Heart left ventricle (tissue), 16 donors: ENCODE measurements at regions of chr1 and their contacts with region 1.

Region 1: GRCh38 chr1:204989266-204990058 is 53.5 kb upstream of the CNTN2 start:
- DNase-seq: peak; percentile 63 to 81 (median 68)
- ATAC-seq: peak; percentile 68 to 91 (median 86)
- H3K4me3 ChIP-seq: no peak overlapping the region
- H3K27ac ChIP-seq: no peak overlapping the region
- H3K4me1 ChIP-seq: peaks cover 0 to 10% (median 0%) of the 10 kb centered on the region in 12 donors
- H3K27me3 ChIP-seq: no peaks in the 10 kb centered on the region
- CTCF ChIP-seq: peak; percentile 83 to 92 (median 92)
- POLR2A ChIP-seq: no peak

Region 2: DNA sequence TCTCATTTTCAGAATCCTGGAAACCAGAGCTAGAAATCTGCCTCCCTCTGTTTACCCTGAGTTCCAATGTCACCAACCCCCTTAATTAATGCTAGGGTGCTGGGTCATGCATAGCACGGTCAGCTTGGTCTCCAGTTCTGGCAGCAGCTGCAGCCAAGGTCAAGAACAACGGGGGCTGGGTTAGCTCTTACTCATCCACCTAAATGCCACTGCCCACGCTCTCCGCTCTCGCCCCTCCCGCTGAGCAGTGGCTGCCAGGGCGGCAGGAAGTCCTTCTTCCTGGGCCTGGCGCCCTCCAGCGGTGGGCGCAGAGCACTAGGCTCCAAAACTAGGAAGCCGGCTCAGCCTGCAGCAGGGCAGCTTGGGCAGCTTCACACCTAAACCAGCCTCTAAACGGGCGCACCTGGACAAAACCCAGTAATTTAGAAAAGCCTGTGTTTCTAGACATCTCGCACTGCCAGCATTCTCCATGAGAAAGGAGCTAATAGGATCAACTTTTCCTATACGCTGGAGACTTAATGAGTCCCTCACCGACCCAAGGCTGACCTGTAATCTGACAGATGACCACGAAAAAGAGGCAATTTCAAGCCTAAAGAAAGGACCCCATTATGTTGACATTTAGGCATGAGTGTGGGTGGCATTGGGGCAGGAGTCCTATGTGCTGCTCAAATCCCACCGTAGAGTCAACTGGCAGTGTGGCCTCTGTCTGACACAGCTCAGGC is 225.6 kb before region 1 on chr1:
- intact Hi-C with region 1: no loop called
- DNase-seq: peak; percentile 55 to 87 (median 73)
- ATAC-seq: peak; percentile 86 to 97 (median 93)
- H3K4me3 ChIP-seq: no peak overlapping the region
- H3K27ac ChIP-seq: no peak overlapping the region
- H3K4me1 ChIP-seq: peaks cover 0 to 13% (median 7%) of the 10 kb centered on the region in 12 donors
- H3K27me3 ChIP-seq: peaks cover 0 to 38% (median 17%) of the 10 kb centered on the region in 9 donors
- CTCF ChIP-seq: peak; percentile 63 to 88 (median 76)
- POLR2A ChIP-seq: no peak

Region 3: GRCh38 chr1:205056188-205056611 is 66.7 kb after region 1 on chr1:
- intact Hi-C with region 1: loop called in 9 of 10 experiments (anchors 1 to 5 kb)
- DNase-seq: peak in 1 of 5 donors; percentile 31
- ATAC-seq: no peak
- H3K4me3 ChIP-seq: no peak overlapping the region
- H3K27ac ChIP-seq: no peak overlapping the region
- H3K4me1 ChIP-seq: no peaks in the 10 kb centered on the region
- H3K27me3 ChIP-seq: peaks cover 0 to 21% (median 0%) of the 10 kb centered on the region in 9 donors
- CTCF ChIP-seq: no peak
- POLR2A ChIP-seq: no peak

Region 4: GRCh38 chr1:205061665-205062069 is 72.2 kb after region 1 on chr1:
- intact Hi-C with region 1: loop called (anchors 1 to 5 kb)
- DNase-seq: peak in 4 of 5 donors; percentile 50 to 69 (median 64)
- ATAC-seq: peak in 3 of 4 donors; percentile 45 to 79 (median 64)
- H3K4me3 ChIP-seq: no peak overlapping the region
- H3K27ac ChIP-seq: no peak overlapping the region
- H3K4me1 ChIP-seq: peaks cover 0 to 8% (median 0%) of the 10 kb centered on the region in 12 donors
- H3K27me3 ChIP-seq: no peaks in the 10 kb centered on the region
- CTCF ChIP-seq: peak; percentile 71 to 90 (median 84)
- POLR2A ChIP-seq: no peak

Region 5: DNA sequence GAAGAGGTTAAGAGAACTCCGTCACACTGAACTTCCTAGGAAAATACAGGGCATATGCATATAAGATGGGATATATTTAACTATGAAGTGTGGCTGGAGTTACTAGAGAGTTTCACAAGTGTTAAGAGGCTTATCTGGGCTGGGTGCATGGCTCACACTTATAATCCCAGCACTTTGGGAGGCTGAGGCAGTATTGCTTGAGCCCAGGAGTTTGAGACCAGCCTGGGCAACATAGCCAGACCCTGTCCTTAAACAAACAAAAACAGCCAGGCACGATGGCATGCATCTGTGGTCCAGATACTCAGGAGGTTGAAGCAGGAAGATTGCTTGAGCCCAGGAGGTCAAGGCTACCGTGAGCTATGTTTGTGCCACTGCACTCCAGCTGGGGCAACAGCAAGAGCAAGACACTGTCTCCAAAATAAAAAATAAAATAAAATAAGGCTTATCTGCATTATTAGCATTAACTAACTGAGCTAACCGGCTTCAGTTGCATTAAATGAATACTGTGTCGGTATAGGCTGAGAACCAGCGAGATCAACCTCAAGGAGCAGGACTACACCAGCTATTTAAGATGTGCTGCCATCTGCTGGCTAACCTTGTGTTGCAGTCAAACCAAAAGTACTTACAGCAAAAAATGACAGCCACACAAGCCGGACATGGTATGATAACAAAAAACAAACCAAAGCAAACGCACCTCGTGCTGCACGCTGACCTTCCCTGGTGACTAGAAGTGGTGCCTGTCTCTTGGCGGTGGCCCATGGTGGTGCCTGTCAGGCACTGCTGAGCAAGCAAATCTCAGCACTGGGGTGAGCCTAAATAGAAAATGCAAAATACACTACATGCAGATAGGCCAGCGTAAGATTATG is 152.0 kb after region 1 on chr1:
- intact Hi-C with region 1: loop called in 4 of 10 experiments (anchors 2 to 10 kb)
- DNase-seq: peak; percentile 53 to 80 (median 64)
- ATAC-seq: peak; percentile 72 to 85 (median 78)
- H3K4me3 ChIP-seq: peak overlapping the region in 3 of 12 donors; percentile 10 to 13 (median 13)
- H3K27ac ChIP-seq: peak overlapping the region in 1 of 12 donors; percentile 14
- H3K4me1 ChIP-seq: peaks cover 0 to 27% (median 10%) of the 10 kb centered on the region in 12 donors
- H3K27me3 ChIP-seq: no peaks in the 10 kb centered on the region
- CTCF ChIP-seq: peak; percentile 68 to 87 (median 78)
- POLR2A ChIP-seq: no peak